T-cell (primary cell): ENCODE measurements at regions of chr1 and their contacts with region 1.

Region 1: DNA sequence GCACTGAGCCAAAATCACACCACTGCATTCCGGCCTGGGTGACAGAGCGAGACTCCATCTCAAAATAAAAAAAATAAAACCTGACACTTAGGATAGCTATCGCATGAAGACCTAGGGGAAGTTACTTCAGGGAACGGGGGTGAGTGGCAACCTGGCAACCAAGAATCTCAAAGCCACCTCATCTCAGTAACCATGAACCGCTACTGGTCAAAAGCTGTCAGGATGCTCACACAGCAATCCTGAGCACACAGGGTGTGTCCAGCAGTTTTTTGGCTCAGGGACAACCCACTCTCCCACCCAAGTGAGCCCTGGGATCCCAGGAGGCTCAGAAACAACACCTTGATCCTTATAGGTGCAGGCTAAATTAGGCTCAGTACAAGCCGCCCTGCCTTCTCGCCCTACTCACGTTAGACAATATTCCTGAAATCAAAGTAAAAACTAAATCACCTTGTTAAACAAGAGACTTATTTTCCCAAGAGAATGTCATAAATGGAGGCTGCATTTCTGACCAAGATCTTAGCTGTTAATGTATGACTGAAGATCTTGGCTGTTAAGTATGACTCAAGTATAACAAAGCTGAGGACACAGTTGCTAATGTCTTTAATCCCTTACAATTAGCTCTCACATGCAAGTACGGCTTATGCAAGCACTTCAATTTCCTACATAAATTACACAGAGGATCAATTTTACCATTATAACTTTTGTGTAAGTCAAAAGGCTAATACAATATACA is 48.3 kb upstream of the NADK start:
- DNase-seq: no peak
- ATAC-seq: no peak
- H3K4me3 ChIP-seq: no peak overlapping the region
- H3K4me3 Mint-ChIP-seq: no peak overlapping the region
- H3K27ac ChIP-seq: no peak overlapping the region
- H3K27ac Mint-ChIP-seq: peak overlapping the region; percentile 1 to 27
- H3K4me1 ChIP-seq: peaks cover 2 to 12% of the 10 kb centered on the region in 2 experiments
- H3K4me1 Mint-ChIP-seq: peaks cover 6 to 45% (median 41%) of the 10 kb centered on the region in 3 donors
- H3K27me3 ChIP-seq: no peaks in the 10 kb centered on the region
- H3K27me3 Mint-ChIP-seq: no peaks in the 10 kb centered on the region

Region 2: GRCh38 chr1:1883092-1883873 is 56.8 kb after region 1 on chr1:
- CTCF ChIA-PET with region 1: no interaction called
- POLR2A ChIA-PET with region 1: interaction called, 3 to 14 read pairs
- DNase-seq: no peak
- ATAC-seq: peak in 1 of 4 experiments; percentile 27
- H3K4me3 ChIP-seq: no peak overlapping the region
- H3K4me3 Mint-ChIP-seq: peak overlapping the region; percentile 21 to 58 (median 34)
- H3K27ac ChIP-seq: no peak overlapping the region
- H3K27ac Mint-ChIP-seq: peak overlapping the region; percentile 16 to 49
- H3K4me1 ChIP-seq: peaks cover 16 to 84% of the 10 kb centered on the region in 2 experiments
- H3K4me1 Mint-ChIP-seq: peaks cover 78 to 81% (median 79%) of the 10 kb centered on the region in 3 donors
- H3K27me3 ChIP-seq: no peaks in the 10 kb centered on the region
- H3K27me3 Mint-ChIP-seq: no peaks in the 10 kb centered on the region